Left ventricle myocardium superior (tissue), 1 donor: ENCODE measurements at regions of chr12 and their contacts with region 1.

Region 1: DNA sequence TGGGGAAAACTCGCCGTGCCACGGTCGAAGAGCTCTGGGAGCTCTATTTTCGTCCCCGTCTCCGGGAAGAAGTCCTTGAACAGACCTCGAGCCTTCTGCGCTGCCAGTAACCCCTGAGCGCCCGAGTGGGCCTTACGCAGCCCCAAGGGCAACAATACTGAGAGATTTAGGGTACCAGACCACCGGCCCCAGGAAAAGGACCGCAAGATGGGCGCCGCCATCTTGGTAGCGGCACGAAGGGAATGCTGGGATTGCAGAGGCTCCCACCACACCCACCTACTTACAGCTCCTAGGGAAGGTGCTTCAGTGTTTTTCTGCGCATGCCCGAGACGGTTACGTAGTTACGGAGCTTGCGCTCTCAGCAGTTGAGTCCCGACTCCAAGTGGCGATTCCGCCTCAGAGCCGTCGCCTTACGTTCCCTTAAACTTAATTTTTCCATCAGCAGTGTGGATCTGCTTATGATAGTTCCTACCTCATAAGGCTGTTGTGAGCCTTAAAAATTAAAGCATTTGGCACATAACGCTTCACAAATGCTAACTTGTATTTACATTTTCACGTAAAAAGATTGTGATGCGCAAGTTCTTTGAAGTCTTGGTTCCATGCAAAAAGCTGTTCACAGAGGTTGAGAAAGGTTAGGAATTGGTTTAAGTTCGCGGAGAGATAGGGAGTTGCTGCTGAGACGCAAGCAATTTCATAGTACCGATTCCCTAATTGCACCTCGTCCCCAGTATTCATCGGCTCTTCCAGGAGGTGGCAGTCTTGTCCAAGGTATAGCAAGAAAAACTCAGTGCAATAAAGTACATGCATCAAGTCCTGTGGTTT is at the start of gene YARS2:
- DNase-seq: peak; percentile 94
- ATAC-seq: peak; percentile 100
- total RNA-seq, gene YARS2: 11.8 TPM

Region 2: GRCh38 chr12:32603858-32604257 is 152.0 kb before region 1 on chr12:
- intact Hi-C with region 1: no loop called
- DNase-seq: no peak
- ATAC-seq: no peak

Region 3: DNA sequence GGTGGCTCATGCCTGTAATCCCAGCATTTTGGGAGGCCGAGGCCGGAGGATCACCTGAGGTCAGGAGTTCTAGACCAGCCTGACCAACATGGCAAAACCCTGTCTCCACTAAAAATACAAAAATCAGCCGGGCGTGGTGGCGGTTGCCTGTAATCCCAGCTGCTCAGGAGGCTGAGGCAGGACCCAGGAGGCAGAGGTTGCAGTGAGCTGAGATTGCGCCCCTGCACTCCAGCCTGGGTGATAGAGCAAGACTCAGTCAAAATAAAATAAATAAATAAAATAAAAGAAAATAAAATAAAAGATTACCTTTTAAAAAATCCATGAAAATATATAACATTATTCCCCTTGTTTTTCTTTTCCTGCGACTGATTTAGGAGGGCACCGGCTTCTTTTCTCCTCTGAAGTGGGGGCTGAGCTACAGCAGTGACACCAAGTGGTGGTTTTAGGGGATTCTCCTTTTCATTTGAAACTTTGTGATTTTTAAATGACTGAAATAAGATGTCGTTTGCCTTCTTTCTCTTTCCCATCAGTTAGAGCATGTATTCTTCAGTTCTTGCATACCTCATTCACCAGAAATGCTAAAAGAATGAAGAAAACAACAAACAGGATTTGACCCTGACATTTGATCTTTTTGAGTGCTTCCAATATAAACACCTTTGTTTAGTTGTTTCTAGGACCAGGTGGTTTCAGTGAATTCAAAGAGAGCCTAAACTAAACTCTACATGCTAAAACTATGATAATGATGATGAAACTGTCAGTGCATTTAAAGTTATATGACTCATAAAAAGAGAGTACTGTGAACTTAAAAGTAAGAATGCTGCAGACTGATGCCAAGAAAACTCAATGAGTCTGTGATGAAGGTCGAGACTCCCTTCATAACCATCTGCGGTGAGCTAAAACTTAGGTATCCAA is 163.3 kb after region 1 on chr12:
- intact Hi-C with region 1: loop called (anchors 10 kb)
- DNase-seq: no peak
- ATAC-seq: peak; percentile 74

Region 4: DNA sequence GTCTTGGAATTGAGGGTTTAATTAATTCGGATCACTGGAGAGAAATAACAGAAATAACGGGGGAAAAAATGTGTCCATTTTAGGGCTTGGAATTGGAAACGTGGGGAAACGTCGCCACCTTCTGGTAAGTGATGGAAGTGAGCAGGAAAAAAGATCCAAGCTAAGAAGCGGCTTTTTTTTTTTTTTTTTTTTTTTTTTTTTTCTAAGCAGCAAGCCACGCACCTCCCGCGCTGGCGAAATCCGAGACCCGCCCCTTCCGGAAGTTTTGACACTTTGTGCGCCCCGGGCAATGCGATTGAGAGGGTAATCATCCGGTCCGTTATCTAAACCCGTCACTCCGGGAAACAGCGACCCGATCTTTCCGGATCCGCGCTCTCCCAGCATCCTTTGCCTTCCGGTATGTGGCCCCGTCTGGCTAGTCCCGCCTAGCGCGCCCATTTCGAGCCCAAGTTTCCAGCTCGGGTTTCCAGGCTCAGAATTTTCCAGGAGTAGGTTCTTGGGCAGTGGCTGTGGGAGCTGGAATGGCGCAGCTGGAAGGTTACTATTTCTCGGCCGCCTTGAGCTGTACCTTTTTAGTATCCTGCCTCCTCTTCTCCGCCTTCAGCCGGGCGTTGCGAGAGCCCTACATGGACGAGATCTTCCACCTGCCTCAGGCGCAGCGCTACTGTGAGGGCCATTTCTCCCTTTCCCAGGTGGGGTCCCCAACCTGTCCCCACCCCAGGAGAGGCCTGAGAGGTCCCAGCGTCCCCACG is 1266.4 kb after region 1 on chr12 and contains the start of gene ALG10:
- intact Hi-C with region 1: loop called (anchors 5 kb)
- DNase-seq: peak; percentile 95
- ATAC-seq: peak; percentile 100
- total RNA-seq, gene ALG10: 3.6 TPM